Activated CD8-positive, alpha-beta T cell treated with anti-CD3 and anti-CD28 coated beads, Interleukin-2, amount 10 ng/mL, durations not matched to agents 7 days and 5 days (primary cell): ENCODE measurements at regions of chr1 and their contacts with region 1.

Region 1: DNA sequence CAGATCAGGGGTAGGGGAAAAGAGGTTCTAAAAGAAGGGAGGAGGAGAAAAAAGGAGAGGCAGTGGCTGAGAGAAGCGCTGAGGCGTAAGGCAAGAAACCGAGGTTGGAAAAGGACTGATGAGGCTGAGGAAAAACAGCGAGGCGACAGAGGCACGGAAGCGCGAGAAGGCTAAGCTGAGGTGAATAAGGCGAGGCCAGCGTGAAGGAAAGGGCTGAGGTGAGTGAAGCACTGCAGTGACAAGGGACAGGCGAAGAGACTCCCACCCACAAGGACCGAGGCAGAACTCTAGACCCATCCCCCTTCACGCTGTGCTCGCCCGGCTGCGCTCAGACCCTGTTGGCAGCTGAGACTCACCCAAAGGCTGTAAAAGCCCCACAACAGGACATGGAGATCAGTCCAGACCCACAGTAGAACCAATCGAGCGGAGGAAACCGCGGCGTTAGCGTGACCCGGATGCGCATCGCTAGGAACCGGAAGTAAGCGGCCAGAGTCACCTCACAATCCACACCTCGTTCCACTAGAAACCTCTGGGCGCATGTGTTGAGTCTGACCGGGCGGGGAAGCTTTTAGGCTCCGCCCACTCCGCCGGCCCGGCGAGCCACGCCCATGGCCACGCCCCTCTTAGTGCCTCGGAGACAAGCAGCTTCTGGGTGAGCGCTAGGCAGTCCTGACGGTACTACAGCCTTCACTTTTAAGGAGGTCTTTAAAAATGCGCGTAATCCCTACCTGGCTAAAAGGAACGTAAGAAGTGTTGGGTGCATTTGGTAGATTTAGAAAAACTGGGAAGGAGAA is at the start of gene EYA3:
- DNase-seq: peak; percentile 99
- ATAC-seq: peak; percentile 93
- H3K4me3 Mint-ChIP-seq: peak within 1 kb of the TSS; percentile 91
- H3K27ac Mint-ChIP-seq: peak within 1 kb of the TSS; percentile 96
- H3K4me1 Mint-ChIP-seq: peaks cover 38% of the 10 kb centered on the region
- H3K27me3 Mint-ChIP-seq: peaks cover 5% of the 10 kb centered on the region
- total RNA-seq, gene EYA3: 33.5 to 34.5 TPM

Region 2: GRCh38 chr1:27858072-27858958 is 230.1 kb before region 1 on chr1:
- CTCF ChIA-PET with region 1: interaction called, 15 read pairs
- POLR2A ChIA-PET with region 1: interaction called, 3 read pairs
- DNase-seq: peak; percentile 90
- ATAC-seq: peak; percentile 96
- H3K4me3 Mint-ChIP-seq: no peak overlapping the region
- H3K27ac Mint-ChIP-seq: peak overlapping the region; percentile 80
- H3K4me1 Mint-ChIP-seq: peaks cover 22% of the 10 kb centered on the region
- H3K27me3 Mint-ChIP-seq: no peaks in the 10 kb centered on the region

Region 3: GRCh38 chr1:27968694-27969093 is 119.7 kb before region 1 on chr1:
- CTCF ChIA-PET with region 1: no interaction called
- POLR2A ChIA-PET with region 1: no interaction called
- DNase-seq: no peak
- ATAC-seq: no peak
- H3K4me3 Mint-ChIP-seq: no peak overlapping the region
- H3K27ac Mint-ChIP-seq: no peak overlapping the region
- H3K4me1 Mint-ChIP-seq: peaks cover 14% of the 10 kb centered on the region
- H3K27me3 Mint-ChIP-seq: no peaks in the 10 kb centered on the region

Region 4: GRCh38 chr1:28112388-28113241 is 24.2 kb after region 1 on chr1:
- CTCF ChIA-PET with region 1: interaction called, 21 read pairs
- POLR2A ChIA-PET with region 1: no interaction called
- DNase-seq: no peak
- ATAC-seq: no peak
- H3K4me3 Mint-ChIP-seq: no peak overlapping the region
- H3K27ac Mint-ChIP-seq: no peak overlapping the region
- H3K4me1 Mint-ChIP-seq: peaks cover 35% of the 10 kb centered on the region
- H3K27me3 Mint-ChIP-seq: peaks cover 11% of the 10 kb centered on the region

Region 5: DNA sequence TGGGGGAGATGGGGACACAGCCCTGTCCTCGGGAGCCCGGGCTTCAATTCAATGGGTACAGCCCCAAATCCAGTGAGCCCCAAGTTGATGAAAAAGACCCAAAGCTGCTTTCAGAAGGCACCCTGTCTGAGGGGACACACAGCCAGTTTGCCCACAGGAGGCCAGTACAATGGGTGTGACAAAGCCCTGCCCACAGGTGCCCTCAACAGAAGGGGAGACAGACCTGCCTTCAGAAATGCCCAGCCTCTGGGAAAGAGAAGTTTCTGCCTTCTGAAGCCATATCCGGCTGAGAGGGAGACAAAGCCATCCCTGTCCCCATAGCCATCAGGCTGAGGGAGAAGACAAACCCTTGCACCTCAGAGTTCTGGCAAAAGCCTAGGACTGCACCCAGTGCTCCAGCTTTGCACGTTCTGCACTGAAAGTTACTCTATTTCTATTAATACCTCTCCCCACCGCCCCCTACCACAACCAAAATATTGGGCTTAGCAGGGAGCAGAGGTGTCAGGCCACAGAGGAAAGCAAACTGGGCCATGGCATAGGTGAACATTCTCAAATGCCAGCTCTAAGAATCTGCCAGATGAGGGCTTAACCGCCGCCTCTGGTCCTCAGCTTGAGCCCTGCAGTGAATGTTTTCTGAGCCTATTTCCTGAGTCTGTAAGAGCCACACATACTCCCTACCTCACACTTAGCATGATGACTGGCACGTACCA is 106.1 kb after region 1 on chr1:
- CTCF ChIA-PET with region 1: interaction called, 14 read pairs
- POLR2A ChIA-PET with region 1: interaction called, 12 read pairs
- DNase-seq: no peak
- ATAC-seq: no peak
- H3K4me3 Mint-ChIP-seq: no peak overlapping the region
- H3K27ac Mint-ChIP-seq: no peak overlapping the region
- H3K4me1 Mint-ChIP-seq: peaks cover 38% of the 10 kb centered on the region
- H3K27me3 Mint-ChIP-seq: no peaks in the 10 kb centered on the region

Region 6: DNA sequence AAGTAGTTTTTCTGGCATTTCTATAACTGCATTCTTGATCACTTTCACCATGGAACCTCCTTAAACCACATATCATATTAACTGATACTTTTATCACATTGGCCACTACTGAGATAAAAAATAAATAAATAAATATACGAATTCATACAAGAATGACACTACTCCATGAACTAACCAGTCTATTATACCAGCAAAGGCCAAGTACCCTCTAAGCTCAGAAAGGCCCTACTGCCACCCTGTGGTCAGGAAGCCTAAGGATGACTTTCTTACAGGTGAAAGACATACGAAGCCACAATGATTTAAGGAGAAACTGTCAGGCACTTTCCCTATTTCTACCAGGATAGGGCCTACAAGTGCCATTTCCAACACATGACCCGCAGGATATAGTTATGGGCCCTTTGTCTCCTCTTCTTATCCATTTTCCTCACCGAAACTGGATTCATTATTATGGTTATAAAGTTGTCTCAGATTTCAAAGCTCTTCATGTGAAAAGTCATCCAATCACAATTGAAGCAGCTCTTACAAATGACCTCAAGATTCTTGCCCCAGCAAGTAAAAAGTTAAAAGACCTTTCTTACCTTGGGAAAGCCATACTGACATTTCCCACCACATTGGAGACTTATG is 120.6 kb after region 1 on chr1:
- CTCF ChIA-PET with region 1: interaction called, 217 read pairs
- POLR2A ChIA-PET with region 1: interaction called, 4 read pairs
- DNase-seq: peak; percentile 82
- ATAC-seq: peak; percentile 91
- H3K4me3 Mint-ChIP-seq: no peak overlapping the region
- H3K27ac Mint-ChIP-seq: no peak overlapping the region
- H3K4me1 Mint-ChIP-seq: peaks cover 12% of the 10 kb centered on the region
- H3K27me3 Mint-ChIP-seq: no peaks in the 10 kb centered on the region